Naive thymus-derived CD4-positive, alpha-beta T cell (primary cell): ENCODE measurements at regions of chr5 and their contacts with region 1.

Region 1: DNA sequence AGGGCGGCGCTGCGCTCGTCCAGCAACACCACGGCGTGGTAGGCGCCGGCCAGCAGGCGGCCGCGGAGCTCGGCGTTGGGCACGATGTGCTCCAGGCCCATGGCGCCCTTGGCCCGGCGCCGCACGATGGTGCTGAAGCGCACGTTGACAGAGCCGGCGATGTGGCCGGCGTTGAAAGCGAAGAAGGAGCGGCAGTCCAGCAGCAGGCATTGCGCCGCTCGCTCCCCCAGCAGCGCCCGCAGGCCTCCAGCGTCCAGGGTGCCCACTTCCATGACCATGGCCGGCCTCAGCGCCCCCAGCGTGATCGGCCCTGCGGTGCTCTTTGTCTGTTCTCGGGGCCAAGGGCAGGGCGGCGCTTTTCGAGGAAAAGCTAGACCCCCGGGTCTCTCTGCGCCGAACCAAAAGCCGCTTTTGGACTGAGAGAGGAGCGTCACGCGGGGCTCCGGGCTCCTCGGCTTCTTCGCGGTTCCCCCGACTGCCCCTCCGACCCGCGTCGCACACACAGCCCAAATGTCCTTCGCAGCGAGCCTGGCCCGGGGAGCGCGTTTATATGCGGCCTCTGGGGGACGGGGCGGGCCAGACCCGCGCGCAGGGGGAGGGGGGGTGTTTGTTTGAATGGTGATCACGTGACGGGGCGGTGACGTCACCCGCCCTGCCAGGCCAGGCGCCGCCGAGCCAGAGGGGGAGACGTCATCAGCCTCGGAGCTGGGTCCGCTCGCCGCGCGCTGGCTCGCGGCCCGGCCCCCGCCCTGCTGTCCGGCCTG is at the start of gene DUSP1:
- DNase-seq: peak; percentile 94 to 99 (median 96)
- ATAC-seq: peak; percentile 64
- H3K4me3 ChIP-seq: peak within 1 kb of the TSS; percentile 81
- H3K4me3 Mint-ChIP-seq: peak within 1 kb of the TSS; percentile 89 to 97 (median 94)
- H3K27ac ChIP-seq: peak within 1 kb of the TSS; percentile 97
- H3K27ac Mint-ChIP-seq: peak within 1 kb of the TSS; percentile 97 to 100 (median 100)
- H3K4me1 ChIP-seq: peaks cover 26 to 39% of the 10 kb centered on the region in 2 donors
- H3K4me1 Mint-ChIP-seq: peaks cover 21 to 73% (median 63%) of the 10 kb centered on the region in 7 donors
- H3K27me3 ChIP-seq: no peaks in the 10 kb centered on the region
- H3K27me3 Mint-ChIP-seq: no peaks in the 10 kb centered on the region
- total RNA-seq, gene DUSP1: 5.4 to 2,522 (median 40.7) TPM

Region 2: GRCh38 chr5:172179361-172179989 is 591.4 kb before region 1 on chr5:
- CTCF ChIA-PET with region 1: no interaction called
- POLR2A ChIA-PET with region 1: interaction called, 3 read pairs
- intact Hi-C with region 1: loop called in 1 of 2 experiments (anchors 2 kb)
- DNase-seq: peak in 8 of 9 donors; percentile 40 to 68 (median 50)
- ATAC-seq: peak; percentile 8
- H3K4me3 ChIP-seq: peak overlapping the region; percentile 76
- H3K4me3 Mint-ChIP-seq: peak overlapping the region; percentile 78 to 99 (median 90)
- H3K27ac ChIP-seq: peak overlapping the region; percentile 92
- H3K27ac Mint-ChIP-seq: peak overlapping the region; percentile 94 to 100 (median 98)
- H3K4me1 ChIP-seq: peaks cover 86 to 87% of the 10 kb centered on the region in 2 donors
- H3K4me1 Mint-ChIP-seq: peaks cover 48 to 95% (median 84%) of the 10 kb centered on the region in 7 donors
- H3K27me3 ChIP-seq: no peaks in the 10 kb centered on the region
- H3K27me3 Mint-ChIP-seq: no peaks in the 10 kb centered on the region

Region 3: DNA sequence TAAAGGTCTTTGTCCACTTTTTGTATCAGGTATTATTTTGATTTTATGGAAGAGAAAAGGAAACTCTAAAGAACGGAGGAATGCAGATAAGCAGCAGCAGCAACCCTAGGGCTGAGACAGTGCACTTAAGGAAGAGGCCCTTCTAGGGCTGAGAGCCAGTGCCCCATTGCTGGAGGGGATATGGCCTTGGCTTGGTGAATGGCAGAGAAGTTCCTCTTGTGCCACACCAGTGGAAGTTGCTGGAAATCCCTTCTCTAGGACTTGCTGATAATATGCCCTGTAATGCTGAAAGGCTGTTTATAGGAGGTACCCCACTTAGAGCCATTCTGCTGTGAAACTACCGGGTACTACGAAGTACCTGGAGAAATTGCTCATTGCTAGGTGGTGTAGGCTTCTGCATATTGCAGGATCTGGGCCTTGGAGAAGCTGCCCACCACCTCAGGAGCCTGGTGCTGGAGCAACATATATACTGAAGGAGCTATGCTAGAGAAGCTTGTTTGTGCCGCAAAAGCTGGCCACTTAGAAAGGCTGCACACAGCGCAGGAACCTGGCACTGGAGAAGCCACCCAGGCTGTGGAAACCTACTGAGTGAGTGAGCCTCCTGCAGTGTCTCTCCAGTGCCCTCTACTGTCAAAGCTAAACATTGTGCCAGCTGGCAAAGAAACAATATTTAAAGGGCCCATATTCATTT is 477.7 kb before region 1 on chr5:
- CTCF ChIA-PET with region 1: no interaction called
- POLR2A ChIA-PET with region 1: no interaction called
- intact Hi-C with region 1: no loop called
- DNase-seq: peak; percentile 20 to 77 (median 67)
- ATAC-seq: peak; percentile 100
- H3K4me3 ChIP-seq: no peak overlapping the region
- H3K4me3 Mint-ChIP-seq: no peak overlapping the region
- H3K27ac ChIP-seq: no peak overlapping the region
- H3K27ac Mint-ChIP-seq: peak overlapping the region in 1 of 9 donors; percentile 43
- H3K4me1 ChIP-seq: no peaks in the 10 kb centered on the region
- H3K4me1 Mint-ChIP-seq: peaks cover 0 to 4% (median 2%) of the 10 kb centered on the region in 7 donors
- H3K27me3 ChIP-seq: no peaks in the 10 kb centered on the region
- H3K27me3 Mint-ChIP-seq: peaks cover 0 to 12% (median 0%) of the 10 kb centered on the region in 5 donors

Region 4: DNA sequence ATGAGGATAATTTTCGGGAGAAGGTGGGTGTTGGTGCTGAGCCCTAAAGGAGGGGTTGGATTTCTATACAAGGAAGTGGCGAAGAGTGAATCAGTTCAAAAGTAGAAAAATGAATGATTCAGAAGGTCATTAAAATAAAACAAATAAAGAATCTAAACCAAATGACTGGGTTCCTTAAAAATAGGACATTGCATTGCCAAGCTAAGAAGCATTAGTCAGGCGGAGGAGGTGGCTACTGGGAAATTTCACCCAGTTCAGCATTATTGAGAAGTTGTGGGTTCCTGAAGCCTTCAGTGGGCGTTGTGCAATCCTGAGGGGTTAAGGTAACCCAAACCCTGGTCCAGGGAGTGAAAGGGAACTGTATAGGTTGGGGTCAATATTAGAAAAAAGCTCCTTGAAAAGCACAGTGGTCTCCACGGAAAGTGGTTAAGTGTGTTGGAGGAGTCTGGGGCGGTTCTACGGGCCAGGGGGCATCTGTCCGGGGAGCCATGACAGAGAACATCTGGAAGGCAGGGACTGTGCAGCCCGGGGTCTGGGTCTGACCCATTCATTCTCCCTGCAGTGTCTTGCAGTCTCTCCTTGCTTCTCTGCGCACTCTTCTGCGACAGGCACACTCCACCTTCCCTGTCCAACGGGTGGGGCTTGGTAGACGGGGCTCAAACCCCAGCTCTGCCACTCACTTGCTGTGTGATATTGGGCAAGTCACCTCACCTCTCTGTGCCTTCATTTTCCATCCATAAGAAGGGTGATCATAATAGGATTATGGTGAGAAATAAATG is 27.8 kb after region 1 on chr5:
- CTCF ChIA-PET with region 1: interaction called, 4 read pairs
- POLR2A ChIA-PET with region 1: interaction called, 11 read pairs
- intact Hi-C with region 1: no loop called
- DNase-seq: no peak
- ATAC-seq: peak; percentile 60
- H3K4me3 ChIP-seq: no peak overlapping the region
- H3K4me3 Mint-ChIP-seq: no peak overlapping the region
- H3K27ac ChIP-seq: no peak overlapping the region
- H3K27ac Mint-ChIP-seq: peak overlapping the region in 2 of 9 donors; percentile 16 to 64
- H3K4me1 ChIP-seq: no peaks in the 10 kb centered on the region
- H3K4me1 Mint-ChIP-seq: peaks cover 0 to 11% (median 4%) of the 10 kb centered on the region in 7 donors
- H3K27me3 ChIP-seq: no peaks in the 10 kb centered on the region
- H3K27me3 Mint-ChIP-seq: no peaks in the 10 kb centered on the region

Region 5: GRCh38 chr5:172932313-172933017 is 161.6 kb after region 1 on chr5:
- CTCF ChIA-PET with region 1: interaction called, 24 read pairs
- POLR2A ChIA-PET with region 1: interaction called, 16 read pairs
- intact Hi-C with region 1: loop called (anchors 1 kb)
- DNase-seq: peak; percentile 53 to 79 (median 68)
- ATAC-seq: peak; percentile 98
- H3K4me3 ChIP-seq: no peak overlapping the region
- H3K4me3 Mint-ChIP-seq: no peak overlapping the region
- H3K27ac ChIP-seq: no peak overlapping the region
- H3K27ac Mint-ChIP-seq: peak overlapping the region in 8 of 9 donors; percentile 25 to 82 (median 52)
- H3K4me1 ChIP-seq: no peaks in the 10 kb centered on the region
- H3K4me1 Mint-ChIP-seq: peaks cover 0 to 13% (median 6%) of the 10 kb centered on the region in 7 donors
- H3K27me3 ChIP-seq: no peaks in the 10 kb centered on the region
- H3K27me3 Mint-ChIP-seq: no peaks in the 10 kb centered on the region

Region 6: GRCh38 chr5:173331956-173332479 is 561.2 kb after region 1 on chr5:
- CTCF ChIA-PET with region 1: no interaction called
- POLR2A ChIA-PET with region 1: no interaction called
- intact Hi-C with region 1: loop called in 1 of 2 experiments (anchors 5 kb)
- DNase-seq: peak; percentile 29 to 92 (median 59)
- ATAC-seq: peak; percentile 96
- H3K4me3 ChIP-seq: no peak overlapping the region
- H3K4me3 Mint-ChIP-seq: peak overlapping the region in 2 of 10 donors; percentile 10 to 48
- H3K27ac ChIP-seq: no peak overlapping the region
- H3K27ac Mint-ChIP-seq: peak overlapping the region in 1 of 9 donors; percentile 62
- H3K4me1 ChIP-seq: no peaks in the 10 kb centered on the region
- H3K4me1 Mint-ChIP-seq: peaks cover 10 to 33% (median 17%) of the 10 kb centered on the region in 7 donors
- H3K27me3 ChIP-seq: peaks cover 0 to 3% of the 10 kb centered on the region in 2 donors
- H3K27me3 Mint-ChIP-seq: peaks cover 7 to 71% (median 68%) of the 10 kb centered on the region in 5 donors

Region 7: GRCh38 chr5:173917788-173918786 is 1147.2 kb after region 1 on chr5:
- CTCF ChIA-PET with region 1: no interaction called
- POLR2A ChIA-PET with region 1: no interaction called
- intact Hi-C with region 1: loop called in 1 of 2 experiments (anchors 10 kb)
- DNase-seq: peak; percentile 14 to 89 (median 78)
- ATAC-seq: peak; percentile 92
- H3K4me3 ChIP-seq: peak overlapping the region; percentile 65
- H3K4me3 Mint-ChIP-seq: no peak overlapping the region
- H3K27ac ChIP-seq: peak overlapping the region; percentile 82
- H3K27ac Mint-ChIP-seq: no peak overlapping the region
- H3K4me1 ChIP-seq: peaks cover 4 to 11% of the 10 kb centered on the region in 2 donors
- H3K4me1 Mint-ChIP-seq: peaks cover 0 to 21% (median 6%) of the 10 kb centered on the region in 7 donors
- H3K27me3 ChIP-seq: no peaks in the 10 kb centered on the region
- H3K27me3 Mint-ChIP-seq: no peaks in the 10 kb centered on the region